ENCODE measurements at regions of chr5 and their contacts with region 1.

Region 1: DNA sequence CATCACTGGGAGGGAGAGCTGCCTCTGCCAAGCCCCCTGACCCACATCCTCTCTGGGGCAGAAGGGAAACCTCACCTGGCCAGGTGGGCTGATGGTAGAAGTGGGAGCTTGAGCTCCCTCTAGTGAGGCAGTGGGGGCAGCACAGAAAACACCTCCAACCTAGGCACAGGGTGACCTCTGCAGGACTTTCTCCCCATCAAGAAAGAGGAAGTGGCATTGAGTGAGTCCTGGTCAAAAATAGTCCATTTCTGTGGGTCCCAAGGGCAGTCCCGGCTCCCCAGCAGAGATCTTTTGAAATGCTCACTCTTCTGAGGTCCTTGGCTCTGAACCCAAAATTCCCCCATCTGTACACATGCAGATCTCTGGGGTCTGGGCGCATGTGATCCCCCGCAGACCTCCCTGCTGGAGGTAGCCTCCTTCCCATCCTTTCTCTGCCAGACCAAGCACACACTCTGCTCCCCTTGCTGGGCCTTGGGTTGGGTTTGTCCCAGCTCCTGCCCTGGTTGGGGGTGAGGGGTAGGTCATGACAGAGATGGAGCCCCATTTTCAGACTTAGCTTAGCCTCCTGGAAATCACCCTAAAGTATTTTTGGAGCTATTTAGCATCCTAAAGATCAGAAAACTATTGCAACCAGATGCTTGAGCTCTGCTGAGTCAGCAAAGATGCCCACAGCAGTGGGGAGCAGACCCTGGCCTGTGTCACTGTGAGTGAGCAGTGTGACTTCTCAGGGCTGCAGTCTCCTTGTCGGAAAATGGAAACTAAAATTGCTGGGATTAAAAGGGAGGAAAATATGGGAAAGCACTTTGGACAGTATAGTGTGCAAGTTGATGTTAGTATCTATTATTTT is 41.6 kb upstream of the LCP2 start:
- DNase-seq: no peak
- ATAC-seq: peak; percentile 95
- H3K4me3 ChIP-seq: no peak overlapping the region
- H3K27ac ChIP-seq: no peak overlapping the region
- H3K4me1 ChIP-seq: peaks cover 13% of the 10 kb centered on the region
- H3K27me3 ChIP-seq: no peaks in the 10 kb centered on the region
- CTCF ChIP-seq: peak; percentile 95 to 100 (median 97); a peak in 5 of 6 replicates
- EP300 ChIP-seq: no peak
- POLR2A ChIP-seq: no peak
- RAD21 ChIP-seq: peak; percentile 98

Region 2: GRCh38 chr5:170173235-170173634 is 165.9 kb before region 1 on chr5:
- CTCF ChIA-PET with region 1: no interaction called
- POLR2A ChIA-PET with region 1: no interaction called
- RAD21 ChIA-PET with region 1: no interaction called
- SMC1A ChIA-PET with region 1: no interaction called
- in situ Hi-C with region 1: no loop called
- intact Hi-C with region 1: no loop called
- DNase-seq: no peak
- ATAC-seq: no peak
- H3K4me3 ChIP-seq: no peak overlapping the region
- H3K27ac ChIP-seq: no peak overlapping the region
- H3K4me1 ChIP-seq: peaks cover 6% of the 10 kb centered on the region
- H3K27me3 ChIP-seq: peaks cover 0 to 1% of the 10 kb centered on the region in 2 experiments; a peak in 2 of 4 replicates
- CTCF ChIP-seq: no peak
- EP300 ChIP-seq: no peak
- POLR2A ChIP-seq: no peak
- RAD21 ChIP-seq: no peak

Region 3: DNA sequence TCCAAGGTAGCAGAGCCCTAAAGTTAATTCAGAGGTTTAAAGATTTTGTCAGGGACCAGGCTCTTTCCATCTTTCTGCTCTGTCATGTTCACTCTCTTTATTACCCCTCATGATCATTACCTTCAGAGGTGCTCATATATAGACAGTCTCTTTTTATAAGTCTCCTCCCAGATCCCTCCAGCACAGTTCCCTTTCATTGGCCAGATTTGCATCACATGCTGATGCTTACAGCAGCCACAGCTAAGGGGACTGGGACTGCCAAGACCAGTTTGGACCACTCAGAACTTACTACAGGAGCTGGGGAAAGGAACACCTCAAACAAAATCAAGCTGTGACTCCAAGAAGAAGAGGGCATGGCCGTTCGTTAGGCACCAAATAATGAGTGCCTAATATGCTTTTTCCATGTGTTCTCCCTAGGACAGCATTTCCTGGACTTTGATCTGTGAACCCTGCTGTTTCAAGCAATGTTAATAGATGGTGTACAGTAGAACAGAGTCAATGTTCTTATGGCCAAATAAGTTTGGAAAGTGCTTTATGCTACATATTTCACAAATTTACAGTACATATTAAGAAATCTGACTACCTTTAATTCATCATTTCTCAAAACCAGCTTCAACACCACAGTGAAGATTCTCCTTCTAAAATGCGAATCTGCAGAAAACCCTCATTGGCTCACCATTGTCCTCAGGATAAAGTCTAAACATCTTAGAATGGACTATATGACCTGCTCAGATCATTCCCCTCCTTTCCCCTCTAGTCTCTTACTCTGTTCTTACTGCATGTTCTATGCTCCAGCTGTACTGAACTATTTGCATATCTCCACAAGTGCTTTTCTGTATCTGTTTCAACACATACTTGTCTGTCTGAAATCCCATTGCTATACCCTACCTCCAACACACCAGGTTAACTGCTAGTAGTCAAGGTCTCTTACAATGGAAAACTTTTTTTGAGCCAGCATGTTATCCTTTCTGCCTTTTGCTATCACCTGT is 103.0 kb before region 1 on chr5:
- CTCF ChIA-PET with region 1: interaction called, 10 read pairs
- POLR2A ChIA-PET with region 1: no interaction called
- RAD21 ChIA-PET with region 1: interaction called, 4 read pairs
- SMC1A ChIA-PET with region 1: interaction called, 5 read pairs
- in situ Hi-C with region 1: no loop called
- intact Hi-C with region 1: no loop called
- DNase-seq: no peak
- ATAC-seq: no peak; the same call in 2 of the 3 replicates
- H3K4me3 ChIP-seq: no peak overlapping the region
- H3K27ac ChIP-seq: no peak overlapping the region
- H3K4me1 ChIP-seq: no peaks in the 10 kb centered on the region
- H3K27me3 ChIP-seq: no peaks in the 10 kb centered on the region
- CTCF ChIP-seq: no peak
- EP300 ChIP-seq: no peak
- POLR2A ChIP-seq: no peak
- RAD21 ChIP-seq: no peak

Region 4: DNA sequence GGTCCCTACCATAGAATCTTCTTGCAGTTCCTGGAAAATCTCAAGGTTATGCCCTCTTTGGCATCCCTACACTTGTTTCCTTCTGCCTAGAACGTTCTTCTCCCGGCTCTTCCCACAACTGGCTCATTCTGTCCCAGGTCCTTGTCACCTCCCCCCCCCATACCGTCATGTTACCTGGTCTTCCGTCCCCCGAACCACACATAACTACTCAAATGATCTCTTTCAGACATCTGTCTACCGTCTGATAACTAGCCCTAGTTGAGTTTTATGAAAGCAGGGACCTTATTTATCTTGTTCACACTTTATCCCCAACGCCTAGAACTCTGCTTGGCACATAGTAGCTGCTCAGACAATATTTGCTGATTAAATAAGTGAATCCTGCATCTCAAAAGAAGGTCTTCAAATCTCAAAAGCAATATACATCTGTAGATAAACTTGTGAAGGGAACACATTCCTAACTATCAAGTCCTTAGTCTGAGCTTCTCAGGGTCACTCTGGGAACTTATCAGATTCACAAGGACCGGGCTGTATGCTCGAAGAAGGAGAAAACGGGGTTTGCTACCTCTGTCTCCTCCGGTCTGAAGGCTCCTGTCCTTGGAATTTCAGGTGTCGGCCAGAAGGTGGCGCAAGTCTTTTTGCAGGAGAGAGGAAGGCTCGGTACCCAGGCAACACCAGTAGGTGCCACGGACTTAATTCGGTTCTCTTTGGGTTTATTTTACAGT is 71.6 kb before region 1 on chr5:
- CTCF ChIA-PET with region 1: interaction called, 189 read pairs
- POLR2A ChIA-PET with region 1: interaction called, 19 read pairs
- RAD21 ChIA-PET with region 1: interaction called, 88 read pairs
- SMC1A ChIA-PET with region 1: interaction called, 125 read pairs
- in situ Hi-C with region 1: no loop called
- intact Hi-C with region 1: loop called (anchors 1 kb)
- DNase-seq: peak; percentile 34
- ATAC-seq: peak; percentile 99
- H3K4me3 ChIP-seq: no peak overlapping the region
- H3K27ac ChIP-seq: no peak overlapping the region; the same call in 1 of the 2 replicates
- H3K4me1 ChIP-seq: peaks cover 7% of the 10 kb centered on the region
- H3K27me3 ChIP-seq: no peaks in the 10 kb centered on the region
- CTCF ChIP-seq: peak; percentile 79 to 88 (median 84)
- EP300 ChIP-seq: no peak
- POLR2A ChIP-seq: no peak
- RAD21 ChIP-seq: peak; percentile 89

Region 5: DNA sequence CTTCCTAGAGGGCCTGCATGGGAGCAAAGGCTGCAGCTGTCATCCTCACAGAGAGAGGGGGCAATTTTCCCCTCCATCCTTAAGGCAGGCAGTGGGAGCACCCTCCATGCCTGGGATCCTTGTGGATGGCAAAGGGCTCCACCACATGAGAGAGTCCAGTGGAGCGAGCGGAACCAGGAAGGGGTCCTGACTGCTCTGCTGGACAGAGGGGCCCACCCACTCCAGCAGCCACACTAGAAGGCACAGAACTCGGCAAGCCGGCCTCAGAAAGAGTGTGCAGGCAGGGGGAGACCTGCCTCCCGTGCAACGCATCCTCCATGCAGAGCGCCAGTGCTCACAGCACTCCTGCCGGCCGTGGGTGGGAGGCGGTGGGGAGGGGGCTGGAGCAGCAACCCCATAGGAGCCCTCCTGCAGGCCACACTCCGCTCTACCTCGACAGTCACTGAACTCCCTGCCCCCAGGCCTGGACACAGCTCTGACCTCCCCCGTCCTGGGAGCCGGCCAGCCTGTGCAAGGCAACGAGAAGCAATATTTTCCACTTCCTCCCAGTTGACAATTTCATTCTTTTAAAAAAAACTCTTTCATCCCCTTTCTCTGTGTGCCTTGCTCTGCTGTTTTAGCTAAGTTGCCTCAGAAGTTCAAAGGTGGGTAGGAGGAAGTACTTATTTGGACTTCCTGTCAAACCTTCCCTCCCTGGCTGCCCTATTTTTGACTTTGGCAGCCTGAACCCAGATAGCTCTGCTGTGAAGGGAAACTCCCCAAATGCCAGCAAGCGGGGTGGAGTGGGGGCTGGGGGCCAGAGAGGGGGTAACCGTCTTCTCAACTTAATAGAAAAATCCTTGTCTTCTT is 36.3 kb before region 1 on chr5:
- CTCF ChIA-PET with region 1: interaction called, 139 read pairs
- POLR2A ChIA-PET with region 1: interaction called, 169 read pairs
- RAD21 ChIA-PET with region 1: interaction called, 274 read pairs
- SMC1A ChIA-PET with region 1: interaction called, 274 read pairs
- in situ Hi-C with region 1: no loop called
- intact Hi-C with region 1: no loop called
- DNase-seq: peak; percentile 68
- ATAC-seq: peak; percentile 89
- H3K4me3 ChIP-seq: no peak overlapping the region
- H3K27ac ChIP-seq: peak overlapping the region; percentile 24; the same call in 1 of the 2 replicates
- H3K4me1 ChIP-seq: peaks cover 34% of the 10 kb centered on the region
- H3K27me3 ChIP-seq: no peaks in the 10 kb centered on the region
- CTCF ChIP-seq: no peak
- EP300 ChIP-seq: no peak
- POLR2A ChIP-seq: no peak
- RAD21 ChIP-seq: no peak

Region 6: DNA sequence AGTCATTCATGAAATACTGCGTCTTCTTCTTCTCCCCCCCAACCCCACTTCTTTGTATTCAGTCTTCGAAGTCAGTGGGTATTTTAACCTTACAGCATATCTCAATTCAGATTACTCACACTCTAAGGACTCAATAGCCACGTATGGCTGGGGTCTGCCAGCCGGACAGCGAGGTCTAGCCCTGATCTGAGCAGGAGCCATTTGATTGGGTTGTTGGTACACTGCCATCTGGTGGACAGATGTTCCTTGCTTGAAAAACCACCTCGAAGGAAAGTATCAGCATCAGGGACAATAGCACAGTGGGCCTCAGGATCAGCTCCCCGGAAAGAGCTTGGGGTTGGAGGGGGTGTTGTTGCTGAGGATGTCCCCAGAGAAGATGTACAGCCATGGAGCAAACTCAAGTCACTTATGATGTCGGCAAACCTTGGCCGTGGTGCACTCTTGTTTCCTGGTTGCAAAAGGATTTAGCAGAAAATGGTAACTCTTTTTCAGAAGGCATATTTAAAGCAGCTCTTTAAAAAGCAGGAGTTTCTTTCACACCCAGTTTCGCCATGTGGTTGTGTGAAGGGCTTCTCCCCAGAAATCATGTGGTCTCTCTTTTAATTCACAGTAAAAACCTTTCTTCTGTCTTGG is 81.7 kb after region 1 on chr5:
- CTCF ChIA-PET with region 1: interaction called, 25 read pairs
- POLR2A ChIA-PET with region 1: no interaction called
- RAD21 ChIA-PET with region 1: interaction called, 32 read pairs
- SMC1A ChIA-PET with region 1: interaction called, 10 read pairs
- in situ Hi-C with region 1: no loop called
- intact Hi-C with region 1: loop called (anchors 2 kb)
- DNase-seq: no peak
- ATAC-seq: peak; percentile 92
- H3K4me3 ChIP-seq: no peak overlapping the region
- H3K27ac ChIP-seq: no peak overlapping the region
- H3K4me1 ChIP-seq: no peaks in the 10 kb centered on the region
- H3K27me3 ChIP-seq: no peaks in the 10 kb centered on the region; a peak in 1 of 4 replicates
- CTCF ChIP-seq: peak; percentile 65 to 73 (median 68)
- EP300 ChIP-seq: no peak
- POLR2A ChIP-seq: no peak
- RAD21 ChIP-seq: peak; percentile 76

Measured in GM12878 (cell line).